Activated T-helper 2 cell treated with anti-CD3 and anti-CD28 coated beads, Interferon-gamma antibody, Interleukin-2, Interleukin-4, amounts not matched to agents 10 μg/mL and 5 μg/mL and 100 μg/mL, durations not matched to agents 14 hours and 24 hours and 36 hours (primary cell): ENCODE measurements at regions of chr21 and their contacts with region 1.

Region 1: DNA sequence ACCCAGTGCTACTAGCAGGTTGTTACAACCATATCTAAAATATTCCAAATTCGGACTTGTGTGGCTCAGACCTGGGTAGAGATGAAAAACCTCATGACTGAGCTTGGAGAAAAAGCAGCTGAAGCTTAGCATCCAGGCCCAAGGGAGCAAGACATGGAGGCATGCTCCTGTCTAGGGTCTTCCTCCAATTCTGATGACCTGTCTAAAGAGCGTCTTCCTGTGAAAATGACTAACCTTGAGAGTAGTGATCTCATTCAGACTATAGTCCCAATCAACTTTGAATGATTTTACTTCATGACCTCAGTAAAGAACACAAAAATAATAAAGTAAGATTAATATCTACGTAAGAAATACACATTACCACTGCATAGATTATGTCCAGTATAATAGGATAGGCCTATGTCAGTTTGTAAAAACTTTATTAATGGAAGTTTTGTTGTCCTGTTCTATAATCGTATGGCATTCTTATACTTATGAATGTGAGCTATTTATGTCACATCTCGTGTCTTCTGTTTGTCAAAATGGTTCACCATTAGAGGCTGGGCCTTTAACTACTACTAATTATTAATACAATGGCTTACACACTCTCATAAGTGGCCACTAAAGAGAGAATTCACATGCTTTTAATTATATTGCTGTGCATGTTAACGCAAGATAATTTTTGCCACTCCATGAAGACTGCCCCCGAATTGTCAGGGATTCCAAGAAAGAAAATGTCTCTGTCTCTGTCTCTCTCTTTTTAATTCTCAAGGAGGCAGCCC is 201.3 kb downstream of the NCAM2 start:
- DNase-seq: no peak
- H3K4me3 Mint-ChIP-seq: peak overlapping the region; percentile 3
- H3K27ac Mint-ChIP-seq: peak overlapping the region; percentile 80
- H3K4me1 Mint-ChIP-seq: peaks cover 28% of the 10 kb centered on the region
- H3K27me3 Mint-ChIP-seq: no peaks in the 10 kb centered on the region

Region 2: GRCh38 chr21:21045518-21045917 is 154.0 kb before region 1 on chr21:
- intact Hi-C with region 1: no loop called
- DNase-seq: no peak
- H3K4me3 Mint-ChIP-seq: no peak overlapping the region
- H3K27ac Mint-ChIP-seq: no peak overlapping the region
- H3K4me1 Mint-ChIP-seq: no peaks in the 10 kb centered on the region
- H3K27me3 Mint-ChIP-seq: no peaks in the 10 kb centered on the region

Region 3: GRCh38 chr21:21184771-21185528 is 14.6 kb before region 1 on chr21:
- intact Hi-C with region 1: loop called (anchors 2 kb)
- DNase-seq: no peak
- H3K4me3 Mint-ChIP-seq: no peak overlapping the region
- H3K27ac Mint-ChIP-seq: no peak overlapping the region
- H3K4me1 Mint-ChIP-seq: peaks cover 4% of the 10 kb centered on the region
- H3K27me3 Mint-ChIP-seq: no peaks in the 10 kb centered on the region

Region 4: DNA sequence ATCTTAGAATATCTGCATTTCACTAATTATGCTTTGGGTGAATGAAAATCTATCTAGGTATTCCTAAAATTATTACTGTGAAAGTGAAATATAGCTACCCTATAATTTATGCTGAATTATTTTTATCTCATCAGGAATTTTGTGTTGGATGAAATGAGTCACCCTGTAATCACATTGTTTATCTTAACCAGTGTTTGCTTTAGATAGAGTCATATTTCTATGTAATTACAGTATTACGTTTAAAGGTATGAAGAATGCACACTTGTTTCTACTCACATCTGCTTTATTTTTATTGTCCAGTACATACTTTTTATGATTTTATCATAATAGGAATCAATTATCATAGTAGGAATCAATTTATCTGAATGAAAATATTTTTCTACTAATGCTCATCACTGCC is 47.9 kb after region 1 on chr21:
- intact Hi-C with region 1: no loop called
- DNase-seq: no peak
- H3K4me3 Mint-ChIP-seq: no peak overlapping the region
- H3K27ac Mint-ChIP-seq: no peak overlapping the region
- H3K4me1 Mint-ChIP-seq: no peaks in the 10 kb centered on the region
- H3K27me3 Mint-ChIP-seq: no peaks in the 10 kb centered on the region

Region 5: DNA sequence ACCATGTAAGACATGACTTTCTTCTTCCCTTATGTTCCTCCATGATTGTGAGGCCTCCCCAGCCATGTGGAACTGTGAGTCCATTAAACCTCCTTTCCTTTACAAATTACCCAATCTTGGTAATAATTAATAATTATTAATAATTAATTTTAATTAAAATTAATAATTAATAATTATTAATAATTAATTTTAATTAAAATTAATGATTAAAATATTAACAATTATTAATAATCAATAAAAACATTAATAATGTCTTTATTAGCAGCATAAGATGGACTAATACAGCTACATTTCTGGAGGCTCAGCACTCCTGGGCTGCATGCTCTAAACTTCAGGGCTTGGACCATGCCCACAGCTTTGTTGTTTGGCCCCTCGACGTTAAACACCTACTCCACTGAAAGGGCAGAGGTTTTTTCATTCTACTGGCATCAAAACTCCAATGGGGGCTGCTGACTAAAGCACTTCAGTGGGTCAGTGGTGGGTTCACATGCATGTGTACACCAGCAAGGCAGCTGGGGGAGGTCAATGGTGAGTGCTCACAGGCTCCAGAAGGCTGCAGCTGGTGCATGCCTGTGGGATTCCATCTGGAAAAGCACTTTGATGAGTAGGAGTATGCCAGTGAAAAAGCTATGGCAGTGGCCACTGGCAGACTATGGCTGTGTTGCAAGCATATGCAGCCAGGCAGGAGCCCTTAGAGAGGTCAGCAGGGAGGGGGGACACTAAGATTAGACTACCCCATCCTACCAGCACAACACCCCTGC is 359.9 kb after region 1 on chr21:
- intact Hi-C with region 1: no loop called
- DNase-seq: no peak
- H3K4me3 Mint-ChIP-seq: no peak overlapping the region
- H3K27ac Mint-ChIP-seq: no peak overlapping the region
- H3K4me1 Mint-ChIP-seq: no peaks in the 10 kb centered on the region
- H3K27me3 Mint-ChIP-seq: no peaks in the 10 kb centered on the region